ENCODE measurements at regions of chr3 and their contacts with region 1.

Region 1: DNA sequence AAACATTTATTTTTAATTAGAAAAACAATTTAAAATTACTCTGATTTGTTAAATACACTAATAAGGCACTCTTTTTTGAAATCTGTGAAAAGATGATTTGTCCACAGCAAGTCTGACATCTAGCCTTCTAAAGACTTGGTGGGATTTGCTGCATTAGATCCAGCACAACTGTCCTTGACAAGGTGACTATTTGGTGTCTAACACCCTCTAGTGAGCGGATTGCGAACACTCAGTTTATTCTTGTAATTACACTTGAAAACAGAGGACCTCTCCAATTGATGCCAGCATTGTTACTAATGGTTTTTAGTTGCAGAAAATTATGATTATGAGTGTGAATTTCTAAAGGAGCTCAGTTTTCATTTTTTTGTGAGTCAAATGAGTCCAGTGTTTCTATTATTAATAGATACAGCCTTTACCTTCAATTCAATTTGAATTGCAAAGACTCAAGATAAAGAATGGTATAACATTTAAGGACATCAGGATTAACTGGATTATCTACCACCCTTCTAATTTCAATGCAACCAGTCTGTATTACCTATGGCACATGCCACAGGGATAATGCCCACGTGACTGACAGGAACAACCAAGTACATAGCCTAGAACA is 29.7 kb upstream of the STRIT1 start:
- DNase-seq: peak; percentile 61
- H3K4me3 ChIP-seq: no peak overlapping the region; a peak in 1 of 4 replicates
- H3K27ac ChIP-seq: no peak overlapping the region
- H3K4me1 ChIP-seq: peaks cover 0 to 8% of the 10 kb centered on the region in 2 experiments; a peak in 2 of 4 replicates
- H3K27me3 ChIP-seq: no peaks in the 10 kb centered on the region
- CTCF ChIP-seq: peak; percentile 83
- EP300 ChIP-seq: no peak
- RAD21 ChIP-seq: peak; percentile 95

Region 2: DNA sequence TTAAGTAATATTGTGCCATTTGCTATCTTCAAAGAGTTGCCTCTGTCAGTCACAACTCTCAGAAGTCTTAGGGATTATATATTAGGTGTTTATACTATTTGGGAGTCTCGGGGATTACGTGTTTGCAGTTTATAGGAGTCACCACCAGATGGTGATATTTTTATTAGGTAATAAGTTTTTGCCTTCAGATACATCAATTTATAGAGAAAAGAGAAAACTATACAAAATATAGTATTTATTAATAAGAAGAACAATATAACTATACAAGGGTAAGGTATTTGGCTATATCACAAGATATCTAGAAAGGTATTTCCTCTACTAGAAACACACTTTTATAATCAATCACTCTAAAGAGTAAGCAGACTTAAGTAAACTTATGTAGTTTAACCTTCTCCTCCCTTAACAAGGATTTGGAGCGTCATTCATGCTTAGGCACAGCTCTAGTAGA is 988.2 kb before region 1 on chr3:
- CTCF ChIA-PET with region 1: interaction called, 11 read pairs
- POLR2A ChIA-PET with region 1: no interaction called
- DNase-seq: peak; percentile 27
- H3K4me3 ChIP-seq: no peak overlapping the region
- H3K27ac ChIP-seq: no peak overlapping the region
- H3K4me1 ChIP-seq: no peaks in the 10 kb centered on the region
- H3K27me3 ChIP-seq: no peaks in the 10 kb centered on the region
- CTCF ChIP-seq: peak; percentile 69
- EP300 ChIP-seq: no peak
- RAD21 ChIP-seq: peak; percentile 61

Region 3: GRCh38 chr3:154758109-154758868 is 564.9 kb before region 1 on chr3:
- CTCF ChIA-PET with region 1: interaction called, 20 read pairs
- POLR2A ChIA-PET with region 1: no interaction called
- DNase-seq: peak; percentile 19
- H3K4me3 ChIP-seq: no peak overlapping the region
- H3K27ac ChIP-seq: no peak overlapping the region; a peak in 1 of 4 replicates
- H3K4me1 ChIP-seq: no peaks in the 10 kb centered on the region
- H3K27me3 ChIP-seq: no peaks in the 10 kb centered on the region
- CTCF ChIP-seq: peak; percentile 84
- EP300 ChIP-seq: no peak
- RAD21 ChIP-seq: peak; percentile 65

Region 4: DNA sequence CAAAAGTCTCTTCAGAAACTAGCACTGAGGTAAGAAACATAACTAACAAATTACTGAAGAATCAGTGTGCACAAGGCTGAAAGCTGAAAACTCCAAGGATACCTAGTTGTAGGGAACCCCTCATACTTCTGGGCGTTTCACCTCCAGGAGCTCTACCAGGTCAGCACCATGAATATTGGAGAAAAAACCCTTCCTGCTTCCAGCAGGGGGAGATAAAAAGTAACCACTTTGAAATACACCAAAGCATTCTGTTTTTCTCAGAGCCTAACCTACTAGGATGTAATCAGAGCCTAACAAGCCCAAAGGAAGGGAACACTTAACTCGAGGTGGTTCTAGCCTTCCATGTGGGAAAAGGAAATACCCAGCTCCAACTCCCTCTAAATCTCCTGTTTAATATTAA is 418.8 kb before region 1 on chr3:
- CTCF ChIA-PET with region 1: interaction called, 24 read pairs
- POLR2A ChIA-PET with region 1: no interaction called
- DNase-seq: peak; percentile 26
- H3K4me3 ChIP-seq: no peak overlapping the region
- H3K27ac ChIP-seq: peak overlapping the region in 1 of 2 experiments; percentile 22; a peak in 1 of 4 replicates
- H3K4me1 ChIP-seq: no peaks in the 10 kb centered on the region; a peak in 1 of 4 replicates
- H3K27me3 ChIP-seq: no peaks in the 10 kb centered on the region
- CTCF ChIP-seq: peak; percentile 58
- EP300 ChIP-seq: no peak
- RAD21 ChIP-seq: peak; percentile 53

Region 5: GRCh38 chr3:155154255-155154654 is 168.9 kb before region 1 on chr3:
- CTCF ChIA-PET with region 1: no interaction called
- POLR2A ChIA-PET with region 1: no interaction called
- DNase-seq: no peak
- H3K4me3 ChIP-seq: no peak overlapping the region
- H3K27ac ChIP-seq: no peak overlapping the region
- H3K4me1 ChIP-seq: no peaks in the 10 kb centered on the region
- H3K27me3 ChIP-seq: no peaks in the 10 kb centered on the region
- CTCF ChIP-seq: no peak
- EP300 ChIP-seq: no peak
- RAD21 ChIP-seq: no peak

Region 6: GRCh38 chr3:155308831-155309230 is 14.3 kb before region 1 on chr3:
- CTCF ChIA-PET with region 1: interaction called, 22 read pairs
- POLR2A ChIA-PET with region 1: no interaction called
- DNase-seq: no peak
- H3K4me3 ChIP-seq: no peak overlapping the region
- H3K27ac ChIP-seq: no peak overlapping the region
- H3K4me1 ChIP-seq: no peaks in the 10 kb centered on the region; a peak in 1 of 4 replicates
- H3K27me3 ChIP-seq: no peaks in the 10 kb centered on the region
- CTCF ChIP-seq: no peak
- EP300 ChIP-seq: no peak
- RAD21 ChIP-seq: no peak

Region 7: DNA sequence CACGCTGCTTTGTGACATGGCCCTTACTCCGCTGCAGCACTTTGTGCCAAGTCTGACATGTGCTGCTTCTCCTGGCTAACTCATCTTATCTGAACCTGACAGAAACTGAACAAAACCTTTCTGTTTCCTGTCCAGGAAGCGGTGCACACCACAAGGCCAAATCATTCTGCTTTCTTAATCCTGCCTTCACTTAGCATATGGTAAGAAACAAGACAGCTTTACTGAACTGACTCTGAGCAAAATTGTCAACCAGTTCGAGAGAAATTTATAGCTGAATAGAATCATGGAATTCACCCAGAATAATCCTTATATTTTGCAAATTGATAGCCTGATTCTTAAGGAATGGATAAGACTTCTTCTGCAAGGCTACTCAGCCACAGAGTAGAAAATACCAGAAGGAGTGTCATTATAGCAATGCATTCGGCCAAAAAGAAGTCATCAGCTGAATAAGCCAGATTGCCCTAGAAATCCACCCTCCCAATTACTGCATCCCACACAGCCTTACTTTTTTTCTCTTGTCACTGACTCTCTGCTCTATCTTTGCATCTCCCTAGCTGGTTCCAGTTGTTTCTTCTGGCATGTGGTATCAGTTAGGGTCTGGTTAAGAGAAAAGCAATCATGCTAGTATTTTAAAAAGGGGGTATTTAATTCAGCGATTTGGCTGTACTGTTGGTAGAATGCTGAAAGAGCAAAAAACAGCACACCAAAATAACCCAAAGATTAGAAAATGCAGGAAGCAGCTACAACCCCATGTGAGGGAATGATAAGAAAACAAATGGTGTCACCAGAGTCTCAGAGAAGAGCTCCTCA is 12.0 kb after region 1 on chr3:
- CTCF ChIA-PET with region 1: interaction called, 33 read pairs
- POLR2A ChIA-PET with region 1: no interaction called
- DNase-seq: peak; percentile 19
- H3K4me3 ChIP-seq: no peak overlapping the region; a peak in 1 of 4 replicates
- H3K27ac ChIP-seq: peak overlapping the region in 1 of 2 experiments; percentile 98; a peak in 2 of 4 replicates
- H3K4me1 ChIP-seq: peaks cover 0 to 55% of the 10 kb centered on the region in 2 experiments; a peak in 2 of 4 replicates
- H3K27me3 ChIP-seq: no peaks in the 10 kb centered on the region
- CTCF ChIP-seq: no peak
- EP300 ChIP-seq: peak in 1 of 2 experiments; percentile 65; a peak in 2 of 4 replicates
- RAD21 ChIP-seq: no peak; the same call in 1 of the 2 replicates

Region 8: GRCh38 chr3:155342344-155342743 is 19.2 kb after region 1 on chr3:
- CTCF ChIA-PET with region 1: interaction called, 11 read pairs
- POLR2A ChIA-PET with region 1: no interaction called
- DNase-seq: no peak
- H3K4me3 ChIP-seq: no peak overlapping the region
- H3K27ac ChIP-seq: no peak overlapping the region
- H3K4me1 ChIP-seq: peaks cover 0 to 4% of the 10 kb centered on the region in 2 experiments; a peak in 2 of 4 replicates
- H3K27me3 ChIP-seq: no peaks in the 10 kb centered on the region
- CTCF ChIP-seq: no peak
- EP300 ChIP-seq: no peak
- RAD21 ChIP-seq: no peak

Region 9: GRCh38 chr3:155411500-155412223 is 88.5 kb after region 1 on chr3:
- CTCF ChIA-PET with region 1: no interaction called
- POLR2A ChIA-PET with region 1: no interaction called
- DNase-seq: no peak
- H3K4me3 ChIP-seq: no peak overlapping the region; a peak in 1 of 4 replicates
- H3K27ac ChIP-seq: no peak overlapping the region
- H3K4me1 ChIP-seq: peaks cover 0 to 15% of the 10 kb centered on the region in 2 experiments; a peak in 1 of 4 replicates
- H3K27me3 ChIP-seq: no peaks in the 10 kb centered on the region
- CTCF ChIP-seq: no peak
- EP300 ChIP-seq: no peak
- RAD21 ChIP-seq: no peak